ENCODE measurements at regions of chr11 and their contacts with region 1.

Region 1: GRCh38 chr11:14892036-14892567 is at the start of gene CYP2R1:
- DNase-seq: peak; percentile 95
- H3K4me3 Mint-ChIP-seq: peak within 1 kb of the TSS; percentile 93
- H3K27ac Mint-ChIP-seq: peak within 1 kb of the TSS; percentile 100
- H3K4me1 Mint-ChIP-seq: peaks cover 47% of the 10 kb centered on the region
- H3K27me3 Mint-ChIP-seq: no peaks in the 10 kb centered on the region
- total RNA-seq, gene CYP2R1: 14.6 to 14.8 TPM

Region 2: DNA sequence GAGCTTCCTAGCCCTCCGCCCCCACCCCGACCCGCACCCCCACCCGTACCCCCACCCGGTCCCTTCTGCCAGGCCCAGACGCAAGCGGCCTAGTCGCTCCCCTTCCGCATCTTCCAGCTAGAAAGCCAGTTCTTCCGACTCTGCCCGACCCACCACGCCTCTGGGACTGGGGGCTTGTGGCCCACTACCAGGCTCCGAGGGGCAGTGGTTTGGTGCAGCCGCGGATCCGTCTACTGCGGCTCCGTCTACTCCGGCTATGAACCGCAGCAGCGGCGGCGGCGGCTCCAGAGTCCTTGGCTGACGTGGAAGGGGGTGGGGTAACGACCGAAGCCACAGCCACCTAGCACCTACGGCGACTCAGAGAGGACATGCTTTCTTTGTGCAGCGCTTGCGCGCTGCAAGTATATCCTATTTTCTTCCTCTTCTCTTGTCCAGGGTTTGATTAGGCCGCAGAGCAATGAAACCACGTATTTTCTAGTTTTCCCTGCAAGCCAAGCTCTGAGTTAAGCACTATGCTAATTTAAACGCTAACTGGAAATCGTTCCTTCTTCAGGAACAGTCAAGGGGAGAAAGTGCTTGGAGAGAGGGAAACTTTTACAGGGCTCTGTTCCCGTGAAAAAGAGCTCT is 392.4 kb before region 1 on chr11 and contains the start of gene COPB1:
- CTCF ChIA-PET with region 1: no interaction called
- POLR2A ChIA-PET with region 1: interaction called, 3 read pairs
- intact Hi-C with region 1: loop called (anchors 2 kb)
- DNase-seq: peak; percentile 96
- H3K4me3 Mint-ChIP-seq: peak within 1 kb of the TSS; percentile 96
- H3K27ac Mint-ChIP-seq: peak within 1 kb of the TSS; percentile 97
- H3K4me1 Mint-ChIP-seq: peaks cover 42% of the 10 kb centered on the region
- H3K27me3 Mint-ChIP-seq: no peaks in the 10 kb centered on the region
- total RNA-seq, gene COPB1: 107 to 108 TPM

Region 3: GRCh38 chr11:14537134-14537599 is 354.9 kb before region 1 on chr11:
- CTCF ChIA-PET with region 1: interaction called, 4 read pairs
- POLR2A ChIA-PET with region 1: no interaction called
- intact Hi-C with region 1: loop called (anchors 1 kb)
- DNase-seq: peak; percentile 42
- H3K4me3 Mint-ChIP-seq: peak overlapping the region; percentile 51
- H3K27ac Mint-ChIP-seq: peak overlapping the region; percentile 76
- H3K4me1 Mint-ChIP-seq: peaks cover 19% of the 10 kb centered on the region
- H3K27me3 Mint-ChIP-seq: no peaks in the 10 kb centered on the region

Region 4: GRCh38 chr11:14578541-14578956 is 313.6 kb before region 1 on chr11:
- CTCF ChIA-PET with region 1: interaction called, 4 read pairs
- POLR2A ChIA-PET with region 1: no interaction called
- intact Hi-C with region 1: loop called (anchors 1 kb)
- DNase-seq: peak; percentile 66
- H3K4me3 Mint-ChIP-seq: peak overlapping the region; percentile 54
- H3K27ac Mint-ChIP-seq: peak overlapping the region; percentile 86
- H3K4me1 Mint-ChIP-seq: peaks cover 49% of the 10 kb centered on the region
- H3K27me3 Mint-ChIP-seq: no peaks in the 10 kb centered on the region

Region 5: GRCh38 chr11:14713496-14714244 is 178.4 kb before region 1 on chr11:
- CTCF ChIA-PET with region 1: no interaction called
- POLR2A ChIA-PET with region 1: no interaction called
- intact Hi-C with region 1: loop called (anchors 5 kb)
- DNase-seq: peak; percentile 40
- H3K4me3 Mint-ChIP-seq: peak overlapping the region; percentile 2
- H3K27ac Mint-ChIP-seq: peak overlapping the region; percentile 61
- H3K4me1 Mint-ChIP-seq: peaks cover 38% of the 10 kb centered on the region
- H3K27me3 Mint-ChIP-seq: no peaks in the 10 kb centered on the region

Region 6: GRCh38 chr11:14789879-14790484 is 102.1 kb before region 1 on chr11:
- CTCF ChIA-PET with region 1: interaction called, 18 read pairs
- POLR2A ChIA-PET with region 1: no interaction called
- intact Hi-C with region 1: no loop called
- DNase-seq: no peak
- H3K4me3 Mint-ChIP-seq: no peak overlapping the region
- H3K27ac Mint-ChIP-seq: no peak overlapping the region
- H3K4me1 Mint-ChIP-seq: peaks cover 14% of the 10 kb centered on the region
- H3K27me3 Mint-ChIP-seq: no peaks in the 10 kb centered on the region

Region 7: GRCh38 chr11:14881576-14882193 is 10.4 kb before region 1 on chr11:
- CTCF ChIA-PET with region 1: no interaction called
- POLR2A ChIA-PET with region 1: no interaction called
- intact Hi-C with region 1: no loop called
- DNase-seq: no peak
- H3K4me3 Mint-ChIP-seq: no peak overlapping the region
- H3K27ac Mint-ChIP-seq: no peak overlapping the region
- H3K4me1 Mint-ChIP-seq: peaks cover 13% of the 10 kb centered on the region
- H3K27me3 Mint-ChIP-seq: no peaks in the 10 kb centered on the region

Region 8: DNA sequence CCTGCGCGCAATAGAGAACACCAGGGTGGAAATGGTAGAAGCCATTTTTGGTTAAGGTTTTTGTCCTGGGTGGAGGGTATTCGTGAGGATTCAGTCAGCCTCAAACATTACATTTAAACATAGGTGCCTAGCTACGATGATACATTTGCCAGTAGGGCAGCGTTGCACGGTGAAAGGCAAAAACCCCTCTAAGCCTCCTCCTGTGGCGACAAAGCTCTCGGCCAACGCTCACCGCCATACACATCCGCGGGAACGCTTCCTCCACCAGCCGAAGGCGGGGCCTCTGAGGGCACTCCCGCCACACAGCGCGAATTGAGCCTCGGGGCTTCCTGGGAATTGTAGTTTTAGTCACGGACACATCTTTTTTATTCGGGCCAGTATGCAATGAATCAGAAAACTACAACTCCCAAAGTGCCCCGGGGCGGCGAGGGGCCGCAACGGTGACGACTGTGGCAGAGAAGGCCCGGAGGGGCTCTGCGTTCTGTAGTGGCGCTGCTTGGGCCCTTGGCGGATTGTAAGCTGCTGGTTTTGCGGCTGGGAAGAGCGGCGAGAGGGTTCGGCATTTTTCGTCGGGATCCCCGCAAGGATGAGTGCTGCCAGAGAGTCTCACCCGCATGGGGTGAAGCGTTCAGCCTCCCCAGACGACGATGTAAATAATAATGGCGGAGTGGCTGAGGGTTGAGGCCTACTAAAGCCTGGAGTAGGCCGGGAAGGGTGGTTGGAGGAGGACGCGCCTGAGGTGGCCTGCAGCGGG is 1846.3 kb after region 1 on chr11 and contains the start of gene C11orf58:
- CTCF ChIA-PET with region 1: no interaction called
- POLR2A ChIA-PET with region 1: no interaction called
- intact Hi-C with region 1: loop called (anchors 2 kb)
- DNase-seq: peak; percentile 97
- H3K4me3 Mint-ChIP-seq: no peak within 1 kb of the TSS
- H3K27ac Mint-ChIP-seq: no peak within 1 kb of the TSS
- H3K4me1 Mint-ChIP-seq: peaks cover 22% of the 10 kb centered on the region
- H3K27me3 Mint-ChIP-seq: no peaks in the 10 kb centered on the region
- total RNA-seq, gene C11orf58: 132 to 134 TPM